ENCODE measurements at regions of chr9 and their contacts with region 1.

Region 1: GRCh38 chr9:88747768-88748167 is 212.8 kb downstream of the NXNL2 start:
- DNase-seq: peak; percentile 72
- ATAC-seq: peak; percentile 82
- H3K4me3 ChIP-seq: no peak overlapping the region
- H3K27ac ChIP-seq: peak overlapping the region; percentile 68
- H3K4me1 ChIP-seq: peaks cover 41% of the 10 kb centered on the region
- H3K27me3 ChIP-seq: no peaks in the 10 kb centered on the region
- CTCF ChIP-seq: no peak

Region 2: DNA sequence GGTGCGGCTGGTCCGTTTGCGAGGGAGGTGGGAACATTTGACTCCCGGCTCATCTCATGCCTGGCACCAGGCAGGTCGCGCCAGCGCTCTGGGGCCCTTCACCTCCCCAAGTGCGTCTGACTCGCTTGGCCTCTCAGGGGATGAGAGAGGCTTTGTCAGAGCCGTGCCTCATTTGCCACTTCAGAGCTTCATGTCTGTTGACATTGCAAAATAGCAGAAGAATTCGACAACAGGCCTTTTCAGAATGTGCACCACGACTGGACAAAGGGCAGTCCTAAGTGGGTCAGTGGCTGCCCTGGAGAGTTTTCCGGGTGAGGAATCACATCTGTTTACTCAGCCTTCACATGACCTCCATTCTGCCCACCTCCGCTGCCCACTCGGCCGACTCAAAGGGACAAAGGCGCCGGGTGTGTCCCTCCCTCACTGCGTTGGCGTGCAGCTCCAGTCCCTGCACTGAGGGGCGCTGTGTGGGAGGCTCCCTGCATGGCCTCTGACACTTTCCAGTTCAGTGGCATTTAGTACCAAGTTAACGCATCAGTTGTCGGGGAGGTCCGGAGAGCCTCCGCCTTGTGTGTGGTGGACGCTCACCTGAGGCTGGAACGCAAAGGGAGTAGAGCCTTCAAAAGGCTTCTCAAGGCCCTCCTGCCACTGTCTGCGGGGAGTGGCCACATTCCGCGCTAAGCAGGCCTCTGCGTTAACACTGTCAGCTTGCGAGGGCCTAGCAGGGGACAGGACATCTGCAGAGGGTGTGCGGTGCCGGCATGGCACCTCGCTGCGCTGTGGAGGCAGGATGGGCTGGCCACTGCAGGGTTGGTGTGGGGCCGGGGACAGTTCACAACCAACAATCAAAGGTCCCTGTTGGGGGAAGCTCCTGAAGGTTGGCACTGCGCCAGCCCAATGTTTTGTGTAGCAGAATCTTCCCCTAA is 41.3 kb before region 1 on chr9:
- CTCF ChIA-PET with region 1: no interaction called
- POLR2A ChIA-PET with region 1: no interaction called
- intact Hi-C with region 1: no loop called
- DNase-seq: no peak
- ATAC-seq: no peak
- H3K4me3 ChIP-seq: no peak overlapping the region
- H3K27ac ChIP-seq: no peak overlapping the region
- H3K4me1 ChIP-seq: no peaks in the 10 kb centered on the region
- H3K27me3 ChIP-seq: no peaks in the 10 kb centered on the region
- CTCF ChIP-seq: no peak

Region 3: DNA sequence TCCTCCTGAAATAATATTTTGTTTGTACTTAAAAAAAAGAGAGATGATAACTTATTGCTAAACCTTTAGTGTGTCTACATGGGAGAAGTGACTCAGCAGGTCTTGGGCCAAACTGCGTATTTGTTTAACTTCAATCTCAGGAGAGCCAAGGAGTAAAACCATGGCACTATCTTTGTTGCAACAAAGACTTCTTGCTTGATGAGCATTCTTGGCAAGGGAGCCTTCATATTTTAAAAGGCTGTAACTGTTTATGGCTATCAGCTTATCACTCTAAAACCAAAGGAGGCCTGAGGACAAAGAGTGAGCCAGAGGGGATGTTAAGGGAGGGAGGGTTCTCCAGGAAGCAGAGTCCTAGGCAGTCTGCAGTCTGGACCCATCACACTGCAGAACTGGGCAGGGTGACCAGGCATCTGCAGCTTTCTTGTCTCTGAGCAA is 27.3 kb after region 1 on chr9:
- CTCF ChIA-PET with region 1: no interaction called
- POLR2A ChIA-PET with region 1: no interaction called
- intact Hi-C with region 1: loop called (anchors 2 kb)
- DNase-seq: peak; percentile 88
- ATAC-seq: peak; percentile 43
- H3K4me3 ChIP-seq: peak overlapping the region; percentile 29; the same call in 1 of the 2 replicates
- H3K27ac ChIP-seq: peak overlapping the region; percentile 100
- H3K4me1 ChIP-seq: peaks cover 63% of the 10 kb centered on the region
- H3K27me3 ChIP-seq: no peaks in the 10 kb centered on the region
- CTCF ChIP-seq: no peak

Measured in PC-3 (cell line).